ENCODE measurements at regions of chr15 and their contacts with region 1.

Region 1: DNA sequence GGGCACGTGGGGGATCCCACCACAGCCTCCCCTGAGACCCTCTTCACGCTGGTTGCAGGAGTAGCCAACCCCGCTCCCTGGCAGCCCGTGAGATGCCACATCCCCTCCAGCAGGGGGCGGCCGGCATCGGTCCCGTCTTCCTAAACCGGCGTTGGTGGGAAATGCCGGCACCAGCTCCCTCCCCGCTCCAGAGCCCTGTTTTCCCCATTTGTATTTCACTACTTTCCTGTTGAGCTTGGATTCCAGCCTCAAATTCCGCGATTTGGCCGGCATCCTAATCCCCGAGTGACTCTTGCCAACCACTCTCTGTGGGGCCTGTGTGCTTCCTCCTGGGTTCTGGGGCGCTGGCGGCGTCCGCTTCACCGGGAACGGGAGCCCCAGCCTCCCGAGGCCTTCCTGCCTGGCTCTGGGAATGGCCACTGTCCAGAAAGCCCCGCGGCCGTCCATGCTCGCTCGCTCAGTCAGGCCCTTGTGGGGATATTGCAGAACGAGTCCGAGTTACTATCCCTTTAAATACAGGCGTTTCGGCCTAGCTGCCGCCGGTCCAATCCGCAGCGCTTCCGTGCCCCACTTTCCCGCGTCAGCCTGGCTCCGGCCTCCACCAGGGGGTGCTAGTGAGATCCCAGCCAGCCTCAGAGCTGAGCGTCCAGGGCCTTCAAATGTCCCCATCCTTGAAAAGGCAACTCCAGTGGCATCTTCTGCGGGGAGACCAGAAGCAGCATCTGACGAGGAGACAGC is 8.1 kb upstream of the ADAMTS17 start:
- DNase-seq: peak; percentile 97
- H3K4me3 ChIP-seq: peak overlapping the region; percentile 51 to 82 (median 66)
- H3K27ac ChIP-seq: peak overlapping the region; percentile 62 to 97 (median 90)
- H3K4me1 ChIP-seq: peaks cover 0 to 16% (median 13%) of the 10 kb centered on the region in 6 donors
- H3K27me3 ChIP-seq: peaks cover 0 to 20% (median 0%) of the 10 kb centered on the region in 7 donors
- CTCF ChIP-seq: peak; percentile 82 to 94 (median 89)
- POLR2A ChIP-seq: peak in 1 of 3 donors; percentile 12

Region 2: DNA sequence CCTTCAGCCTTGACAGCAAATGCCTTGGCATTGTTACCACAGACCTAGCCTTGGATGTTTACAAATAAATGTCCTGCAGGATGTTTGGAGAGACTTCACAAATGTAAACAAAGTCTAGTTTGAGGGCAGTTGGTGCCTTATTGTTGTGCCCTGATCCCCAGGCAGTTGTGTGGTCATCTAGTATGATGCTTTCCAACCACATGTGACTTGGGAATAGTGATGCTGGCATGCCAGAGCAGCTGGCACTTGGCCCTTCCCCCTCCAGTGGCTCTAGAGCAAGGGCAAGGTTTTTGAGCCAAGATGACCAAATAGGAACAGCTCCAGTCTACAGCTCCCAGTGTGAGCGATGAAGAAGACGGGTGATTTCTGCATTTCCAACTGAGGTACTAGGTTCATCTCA is 266.3 kb before region 1 on chr15:
- intact Hi-C with region 1: no loop called
- DNase-seq: peak; percentile 7
- H3K4me3 ChIP-seq: no peak overlapping the region
- H3K27ac ChIP-seq: no peak overlapping the region
- H3K4me1 ChIP-seq: no peaks in the 10 kb centered on the region
- H3K27me3 ChIP-seq: no peaks in the 10 kb centered on the region
- CTCF ChIP-seq: no peak
- POLR2A ChIP-seq: no peak

Region 3: GRCh38 chr15:100429116-100429728 is 79.4 kb after region 1 on chr15:
- intact Hi-C with region 1: no loop called
- DNase-seq: no peak
- H3K4me3 ChIP-seq: no peak overlapping the region
- H3K27ac ChIP-seq: no peak overlapping the region
- H3K4me1 ChIP-seq: no peaks in the 10 kb centered on the region
- H3K27me3 ChIP-seq: no peaks in the 10 kb centered on the region
- CTCF ChIP-seq: no peak
- POLR2A ChIP-seq: no peak

Region 4: GRCh38 chr15:100570735-100571313 is 221.0 kb after region 1 on chr15:
- intact Hi-C with region 1: loop called (anchors 2 kb)
- DNase-seq: no peak
- H3K4me3 ChIP-seq: no peak overlapping the region
- H3K27ac ChIP-seq: peak overlapping the region in 1 of 8 donors; percentile 79
- H3K4me1 ChIP-seq: peaks cover 0 to 12% (median 6%) of the 10 kb centered on the region in 6 donors
- H3K27me3 ChIP-seq: no peaks in the 10 kb centered on the region
- CTCF ChIP-seq: no peak
- POLR2A ChIP-seq: no peak

Measured in spleen (tissue), 13 donors.